Activated CD8-positive, alpha-beta memory T cell treated with anti-CD3 and anti-CD28 coated beads, Interleukin-2, amount 10 ng/mL, durations not matched to agents 7 days and 5 days (primary cell): ENCODE measurements at regions of chr6 and their contacts with region 1.

Region 1: GRCh38 chr6:27157459-27158315 is 89.8 kb upstream of the PRSS16 start:
- DNase-seq: peak; percentile 89
- ATAC-seq: peak; percentile 83
- H3K4me3 Mint-ChIP-seq: peak overlapping the region; percentile 76
- H3K27ac Mint-ChIP-seq: peak overlapping the region; percentile 89
- H3K4me1 Mint-ChIP-seq: peaks cover 52% of the 10 kb centered on the region
- H3K27me3 Mint-ChIP-seq: no peaks in the 10 kb centered on the region

Region 2: GRCh38 chr6:27126815-27127537 is 30.7 kb before region 1 on chr6:
- CTCF ChIA-PET with region 1: interaction called, 20 read pairs
- DNase-seq: peak; percentile 93
- ATAC-seq: peak; percentile 68
- H3K4me3 Mint-ChIP-seq: peak overlapping the region; percentile 77
- H3K27ac Mint-ChIP-seq: peak overlapping the region; percentile 95
- H3K4me1 Mint-ChIP-seq: peaks cover 43% of the 10 kb centered on the region
- H3K27me3 Mint-ChIP-seq: no peaks in the 10 kb centered on the region

Region 3: DNA sequence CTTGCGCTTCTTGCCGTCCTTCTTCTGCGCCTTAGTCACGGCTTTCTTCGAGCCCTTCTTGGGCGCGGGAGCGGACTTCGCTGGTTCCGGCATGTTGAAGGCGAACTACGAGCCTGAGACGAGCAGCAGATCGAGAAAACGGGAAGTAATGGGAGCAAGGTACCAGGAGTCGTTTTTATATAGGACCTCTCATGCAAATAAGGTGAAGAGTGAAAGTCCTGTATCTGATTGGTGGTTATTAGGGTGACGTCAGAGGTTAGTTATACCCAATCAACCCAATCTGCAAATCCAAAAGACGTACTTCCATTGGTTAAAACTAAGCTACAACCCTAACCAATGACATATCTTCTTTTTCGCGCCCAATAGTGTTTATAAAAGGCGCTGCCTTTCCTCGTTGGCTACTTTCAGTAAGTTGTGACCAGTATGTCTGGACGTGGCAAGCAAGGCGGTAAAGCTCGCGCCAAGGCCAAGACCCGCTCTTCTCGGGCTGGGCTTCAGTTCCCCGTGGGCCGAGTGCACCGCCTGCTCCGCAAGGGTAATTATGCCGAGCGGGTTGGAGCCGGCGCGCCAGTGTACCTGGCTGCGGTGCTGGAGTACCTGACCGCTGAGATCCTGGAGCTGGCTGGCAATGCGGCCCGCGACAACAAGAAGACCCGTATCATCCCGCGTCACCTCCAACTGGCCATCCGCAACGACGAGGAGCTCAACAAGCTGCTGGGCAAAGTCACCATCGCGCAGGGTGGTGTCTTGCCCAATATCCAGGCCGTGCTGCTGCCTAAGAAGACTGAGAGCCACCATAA is 10.8 kb before region 1 on chr6:
- CTCF ChIA-PET with region 1: interaction called, 19 read pairs
- DNase-seq: peak; percentile 92
- ATAC-seq: peak; percentile 68
- H3K4me3 Mint-ChIP-seq: no peak overlapping the region
- H3K27ac Mint-ChIP-seq: no peak overlapping the region
- H3K4me1 Mint-ChIP-seq: peaks cover 25% of the 10 kb centered on the region
- H3K27me3 Mint-ChIP-seq: no peaks in the 10 kb centered on the region

Region 4: GRCh38 chr6:27177485-27178406 is 20.1 kb after region 1 on chr6:
- CTCF ChIA-PET with region 1: interaction called, 25 read pairs
- DNase-seq: peak; percentile 87
- ATAC-seq: peak; percentile 86
- H3K4me3 Mint-ChIP-seq: peak overlapping the region; percentile 91
- H3K27ac Mint-ChIP-seq: peak overlapping the region; percentile 88
- H3K4me1 Mint-ChIP-seq: peaks cover 11% of the 10 kb centered on the region
- H3K27me3 Mint-ChIP-seq: peaks cover 34% of the 10 kb centered on the region

Region 5: GRCh38 chr6:27303613-27304272 is 146.1 kb after region 1 on chr6:
- CTCF ChIA-PET with region 1: no interaction called
- DNase-seq: no peak
- ATAC-seq: no peak
- H3K4me3 Mint-ChIP-seq: no peak overlapping the region
- H3K27ac Mint-ChIP-seq: no peak overlapping the region
- H3K4me1 Mint-ChIP-seq: no peaks in the 10 kb centered on the region
- H3K27me3 Mint-ChIP-seq: peaks cover 58% of the 10 kb centered on the region